ENCODE measurements at regions of chr3 and their contacts with region 1.

Region 1: DNA sequence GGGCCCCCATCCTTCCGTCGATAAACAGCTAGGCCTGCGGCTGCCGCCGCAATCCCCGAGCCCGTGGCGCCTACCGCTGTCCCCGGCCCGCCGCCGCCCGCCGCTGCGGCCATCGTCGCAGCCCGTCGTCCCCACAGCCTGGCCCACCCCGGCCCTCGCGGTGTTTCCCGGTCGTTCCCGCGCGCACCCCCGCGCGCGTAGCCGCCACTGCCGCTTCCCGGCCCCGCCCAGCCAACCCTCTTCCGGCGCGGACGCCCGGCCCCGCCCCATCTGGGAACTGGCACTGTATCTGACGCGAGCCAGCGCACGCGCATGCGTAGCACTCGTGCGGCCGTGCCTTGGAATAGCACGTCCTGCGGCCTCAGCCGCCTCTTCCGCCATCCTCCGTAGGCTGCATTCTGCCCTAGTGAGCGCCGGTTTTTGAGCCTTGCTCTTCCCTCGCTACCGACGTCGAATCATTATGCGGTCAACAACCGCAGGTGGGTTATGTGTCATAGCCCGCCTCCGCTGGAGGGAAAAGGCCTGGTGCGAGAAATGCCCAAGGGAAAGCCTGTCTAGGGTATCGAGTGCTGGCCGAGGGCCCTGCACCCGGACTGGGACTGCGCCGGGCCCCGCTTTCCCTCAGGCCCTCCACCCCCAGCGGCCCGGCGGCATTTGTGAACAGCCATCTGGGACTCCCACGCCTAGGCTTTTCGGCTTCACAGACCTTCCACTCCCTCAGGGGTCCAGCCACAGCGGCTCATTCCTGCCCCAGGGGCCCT is at the start of gene SMARCC1:
- DNase-seq: peak; percentile 88 to 97
- H3K4me3 ChIP-seq: peak within 1 kb of the TSS; percentile 67
- H3K27ac ChIP-seq: peak within 1 kb of the TSS; percentile 77
- H3K4me1 ChIP-seq: peaks cover 20% of the 10 kb centered on the region
- H3K27me3 ChIP-seq: no peaks in the 10 kb centered on the region
- CTCF ChIP-seq: no peak
- total RNA-seq, gene SMARCC1: 88.1 and 130 TPM in 2 replicates

Region 2: GRCh38 chr3:47083786-47084185 is 698.1 kb before region 1 on chr3:
- CTCF ChIA-PET with region 1: no interaction called
- POLR2A ChIA-PET with region 1: no interaction called
- intact Hi-C with region 1: no loop called
- DNase-seq: no peak
- H3K4me3 ChIP-seq: no peak overlapping the region
- H3K27ac ChIP-seq: no peak overlapping the region
- H3K4me1 ChIP-seq: no peaks in the 10 kb centered on the region
- H3K27me3 ChIP-seq: no peaks in the 10 kb centered on the region
- CTCF ChIP-seq: no peak

Region 3: DNA sequence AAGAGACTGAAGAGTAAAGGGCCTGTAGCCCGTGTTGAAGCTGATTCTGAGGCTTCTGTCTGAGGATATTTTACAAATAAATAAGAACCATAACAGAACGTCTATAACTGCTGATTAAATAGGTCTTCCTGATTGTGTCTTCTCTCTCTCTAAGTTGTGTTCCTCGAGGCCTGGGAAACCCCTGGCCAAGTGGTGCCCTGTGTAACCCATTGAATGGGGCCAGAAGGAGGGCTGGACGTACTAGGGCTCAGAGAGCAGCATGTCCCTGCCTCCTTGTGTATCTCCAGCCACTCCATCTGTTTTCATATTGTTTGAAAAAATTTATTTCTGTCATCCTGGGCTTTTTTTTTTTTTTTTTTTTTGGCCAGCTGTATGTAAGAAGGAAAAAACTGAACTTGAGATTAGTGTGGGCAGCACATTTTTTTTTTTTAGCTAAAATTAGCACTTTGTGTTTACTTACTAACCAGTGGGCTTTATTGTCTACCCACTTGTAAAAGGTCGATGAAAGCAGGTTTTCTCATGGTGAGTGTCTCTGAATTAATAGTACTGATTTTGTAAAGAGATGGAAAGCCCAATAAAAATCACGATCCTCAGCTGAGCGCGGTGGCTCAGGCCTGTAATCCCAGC is 31.8 kb after region 1 on chr3:
- CTCF ChIA-PET with region 1: no interaction called
- POLR2A ChIA-PET with region 1: no interaction called
- intact Hi-C with region 1: no loop called
- DNase-seq: no peak
- H3K4me3 ChIP-seq: no peak overlapping the region
- H3K27ac ChIP-seq: no peak overlapping the region
- H3K4me1 ChIP-seq: no peaks in the 10 kb centered on the region
- H3K27me3 ChIP-seq: no peaks in the 10 kb centered on the region
- CTCF ChIP-seq: no peak

Region 4: DNA sequence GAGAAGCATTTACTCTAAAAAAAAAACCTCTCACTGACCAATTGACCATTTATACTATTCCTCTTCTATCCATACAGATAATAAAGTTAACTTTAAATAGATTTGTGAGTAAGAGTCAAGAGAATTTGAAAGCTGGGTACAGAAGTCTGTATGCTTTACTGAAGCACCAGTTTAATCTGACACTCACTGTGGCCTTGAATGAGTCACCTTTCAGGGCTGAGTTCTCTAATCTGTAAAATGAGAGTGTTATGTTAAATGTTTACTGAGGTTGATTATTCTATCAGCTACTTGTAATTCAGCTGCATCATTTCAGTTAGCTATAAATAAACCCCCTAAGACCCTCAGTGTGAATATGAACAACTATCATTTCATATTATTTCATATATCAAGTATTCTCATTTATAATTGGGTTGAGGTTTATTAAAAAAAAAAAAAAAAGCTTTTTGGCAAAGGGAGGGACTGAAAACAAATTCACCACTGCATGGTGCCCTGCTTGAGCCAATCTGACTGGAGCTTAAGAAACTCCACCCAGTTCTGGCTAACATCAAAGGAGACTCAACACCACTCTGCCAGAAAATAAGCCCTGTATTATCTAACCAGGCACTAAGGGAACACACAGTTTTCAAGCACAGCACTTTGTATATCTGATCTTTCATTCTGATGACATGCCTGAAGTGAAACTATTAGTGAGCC is 231.6 kb after region 1 on chr3:
- CTCF ChIA-PET with region 1: interaction called, 14 read pairs
- POLR2A ChIA-PET with region 1: no interaction called
- intact Hi-C with region 1: no loop called
- DNase-seq: peak in 1 of 2 experiments; percentile 65
- H3K4me3 ChIP-seq: no peak overlapping the region
- H3K27ac ChIP-seq: peak overlapping the region; percentile 34
- H3K4me1 ChIP-seq: peaks cover 29% of the 10 kb centered on the region
- H3K27me3 ChIP-seq: no peaks in the 10 kb centered on the region
- CTCF ChIP-seq: no peak